Caco-2 (cell line): ENCODE measurements at regions of chr14 and their contacts with region 1.

Region 1: DNA sequence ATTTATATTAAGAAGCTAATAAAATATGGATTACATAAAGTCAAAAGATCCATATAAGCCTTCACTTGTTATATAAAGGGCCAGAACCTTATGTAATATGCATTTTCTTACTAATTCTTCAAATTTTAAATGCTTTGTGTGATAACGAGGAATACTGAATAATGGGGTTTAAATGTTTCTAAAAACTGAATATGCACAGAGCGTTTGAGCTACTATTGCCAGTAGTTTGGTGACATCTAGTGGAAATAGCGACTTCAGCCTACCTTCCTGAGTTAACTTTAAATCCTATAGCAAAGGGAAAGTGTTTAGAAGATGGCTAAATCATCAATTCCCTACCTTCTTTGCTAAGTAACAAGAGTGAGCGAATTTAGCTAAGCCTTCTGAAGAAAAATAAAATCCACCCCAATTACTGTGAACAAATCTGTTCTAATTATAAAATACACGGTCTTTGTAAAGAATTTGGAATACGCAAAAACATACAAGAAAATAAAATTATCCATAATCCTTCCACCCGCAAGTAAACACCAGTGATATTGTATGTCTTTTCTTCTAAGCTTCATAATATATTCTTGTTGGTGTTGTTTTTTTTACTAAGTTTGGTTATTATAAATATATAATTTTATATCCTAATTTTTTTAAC is 115.5 kb upstream of the G2E3 start:
- DNase-seq: peak in 1 of 2 experiments; percentile 27
- H3K4me3 ChIP-seq: no peak overlapping the region
- H3K4me3 Mint-ChIP-seq: no peak overlapping the region
- H3K27ac Mint-ChIP-seq: no peak overlapping the region
- H3K4me1 ChIP-seq: no peaks in the 10 kb centered on the region
- H3K4me1 Mint-ChIP-seq: no peaks in the 10 kb centered on the region
- H3K27me3 ChIP-seq: no peaks in the 10 kb centered on the region
- H3K27me3 Mint-ChIP-seq: no peaks in the 10 kb centered on the region
- CTCF ChIP-seq: peak; percentile 58 to 65

Region 2: DNA sequence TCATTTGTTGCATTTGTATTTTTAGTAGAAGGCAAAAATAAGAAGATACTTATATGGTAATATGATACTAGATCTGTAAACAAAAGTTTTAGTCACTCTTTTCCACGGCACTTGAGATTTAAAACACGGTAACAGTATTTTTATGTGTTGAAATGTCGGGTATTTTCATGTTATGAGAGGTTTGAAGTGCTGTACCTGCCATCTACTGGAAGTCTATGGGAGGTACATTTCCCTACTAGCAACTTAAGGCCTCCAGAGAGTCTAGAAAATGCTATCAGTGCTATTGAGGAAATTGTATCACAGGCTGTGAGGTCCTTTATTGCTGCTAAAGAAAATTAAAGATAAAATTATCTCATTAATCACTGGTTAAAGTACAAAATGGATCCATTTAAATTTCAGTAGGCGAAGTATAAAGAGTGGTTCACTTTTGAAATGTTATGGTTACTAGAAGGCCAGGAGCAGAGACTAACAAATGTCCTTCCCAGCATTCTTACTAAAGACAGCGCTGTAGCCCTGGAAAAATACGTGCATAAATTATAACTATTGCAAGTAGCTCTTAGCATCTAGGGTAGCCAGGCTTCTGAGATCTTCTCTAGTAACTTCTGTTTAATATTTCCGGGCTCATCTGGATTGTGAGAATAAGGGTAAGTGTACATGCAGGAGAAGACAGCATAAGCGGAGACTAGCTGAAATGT is 438.2 kb before region 1 on chr14:
- CTCF ChIA-PET with region 1: no interaction called
- POLR2A ChIA-PET with region 1: no interaction called
- intact Hi-C with region 1: loop called (anchors 5 kb)
- DNase-seq: peak in 1 of 2 experiments; percentile 20
- H3K4me3 ChIP-seq: no peak overlapping the region
- H3K4me3 Mint-ChIP-seq: no peak overlapping the region
- H3K27ac Mint-ChIP-seq: no peak overlapping the region
- H3K4me1 ChIP-seq: no peaks in the 10 kb centered on the region
- H3K4me1 Mint-ChIP-seq: no peaks in the 10 kb centered on the region
- H3K27me3 ChIP-seq: no peaks in the 10 kb centered on the region
- H3K27me3 Mint-ChIP-seq: peaks cover 9% of the 10 kb centered on the region
- CTCF ChIP-seq: peak; percentile 56 to 58

Region 3: DNA sequence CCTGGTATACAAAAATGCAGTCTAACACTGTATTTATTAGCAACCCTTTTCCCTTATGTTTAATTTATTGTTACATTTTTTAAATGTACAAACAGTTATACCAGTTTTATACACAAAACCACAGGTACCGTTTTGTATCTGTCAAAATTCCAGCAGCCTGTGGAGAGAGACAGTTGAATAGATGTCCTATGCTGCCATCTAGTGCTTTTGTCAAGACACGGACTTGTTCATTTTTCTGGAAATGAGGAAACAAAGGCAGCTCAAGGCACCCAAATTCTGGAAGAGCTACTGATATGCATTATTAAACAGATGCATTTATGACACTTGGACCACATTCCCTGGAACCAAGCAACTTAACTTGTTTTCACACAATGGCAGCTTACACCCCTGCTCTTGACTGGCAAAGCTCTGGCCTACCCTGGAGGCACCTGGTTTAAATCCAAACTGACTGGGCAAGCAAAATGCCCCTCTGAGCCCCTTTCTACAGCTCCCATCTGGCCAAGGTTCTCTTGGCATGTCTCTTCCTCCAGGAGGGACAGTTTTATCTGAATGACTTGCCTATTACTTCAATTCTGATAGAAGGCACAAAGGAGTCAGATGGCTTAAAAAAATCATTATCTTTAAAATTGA is 228.9 kb before region 1 on chr14:
- CTCF ChIA-PET with region 1: no interaction called
- POLR2A ChIA-PET with region 1: no interaction called
- intact Hi-C with region 1: loop called (anchors 1 kb)
- DNase-seq: peak in 1 of 2 experiments; percentile 32
- H3K4me3 ChIP-seq: no peak overlapping the region
- H3K4me3 Mint-ChIP-seq: no peak overlapping the region
- H3K27ac Mint-ChIP-seq: no peak overlapping the region
- H3K4me1 ChIP-seq: no peaks in the 10 kb centered on the region
- H3K4me1 Mint-ChIP-seq: no peaks in the 10 kb centered on the region
- H3K27me3 ChIP-seq: no peaks in the 10 kb centered on the region
- H3K27me3 Mint-ChIP-seq: peaks cover under 1% of the 10 kb centered on the region
- CTCF ChIP-seq: peak; percentile 32 to 63

Region 4: DNA sequence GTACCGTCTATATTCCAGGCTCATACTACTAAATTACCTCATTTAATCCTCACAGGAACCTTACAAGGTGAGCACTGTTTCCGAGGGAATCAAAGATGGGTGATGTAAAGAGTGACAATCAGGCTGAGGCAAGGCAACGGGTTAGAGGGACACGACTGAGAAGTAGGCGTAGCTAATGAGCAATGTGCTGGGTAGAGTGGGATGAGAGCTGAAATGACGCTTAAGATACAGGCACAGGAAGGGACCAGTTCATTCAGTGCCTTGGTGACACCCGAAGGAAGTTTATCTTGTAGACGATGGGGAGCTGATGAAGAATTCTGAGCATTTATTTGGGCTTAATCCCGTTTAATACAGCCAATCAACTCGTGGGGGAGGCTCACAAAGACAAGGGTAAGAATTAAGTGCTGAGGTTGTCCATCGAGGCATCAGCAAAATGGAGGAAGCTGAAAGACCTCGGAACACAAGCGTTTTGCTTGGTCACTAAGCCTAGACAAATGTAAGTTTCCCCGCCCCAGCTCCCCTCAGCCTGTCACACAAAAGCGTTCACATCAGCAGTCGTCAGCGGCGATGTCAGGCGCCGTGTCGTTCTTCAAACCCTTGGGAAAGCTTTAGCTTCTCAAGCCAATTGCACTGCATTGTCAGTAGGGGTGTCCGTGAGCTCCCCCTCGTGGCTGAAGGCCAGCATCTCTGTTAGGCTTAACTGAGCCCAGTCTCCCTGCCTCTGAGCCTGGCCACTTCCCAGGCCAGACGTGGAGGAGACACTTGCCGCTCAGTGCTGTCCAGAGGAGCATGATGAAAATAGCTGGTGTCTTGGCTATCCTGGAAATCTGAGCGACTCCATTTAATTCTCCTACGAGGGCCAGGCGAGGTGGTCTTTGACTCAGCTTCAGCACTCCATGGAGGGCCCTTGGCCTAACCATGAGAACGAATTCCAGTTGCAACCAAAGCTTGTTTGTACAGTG is 173.0 kb before region 1 on chr14:
- CTCF ChIA-PET with region 1: interaction called, 17 read pairs
- POLR2A ChIA-PET with region 1: no interaction called
- intact Hi-C with region 1: loop called (anchors 1 kb)
- DNase-seq: peak; percentile 75 to 80
- H3K4me3 ChIP-seq: no peak overlapping the region
- H3K4me3 Mint-ChIP-seq: no peak overlapping the region
- H3K27ac Mint-ChIP-seq: no peak overlapping the region
- H3K4me1 ChIP-seq: no peaks in the 10 kb centered on the region
- H3K4me1 Mint-ChIP-seq: no peaks in the 10 kb centered on the region
- H3K27me3 ChIP-seq: no peaks in the 10 kb centered on the region
- H3K27me3 Mint-ChIP-seq: no peaks in the 10 kb centered on the region
- CTCF ChIP-seq: peak; percentile 89 to 94

Region 5: GRCh38 chr14:30305346-30305745 is 138.1 kb before region 1 on chr14:
- CTCF ChIA-PET with region 1: no interaction called
- POLR2A ChIA-PET with region 1: no interaction called
- intact Hi-C with region 1: no loop called
- DNase-seq: no peak
- H3K4me3 ChIP-seq: no peak overlapping the region
- H3K4me3 Mint-ChIP-seq: no peak overlapping the region
- H3K27ac Mint-ChIP-seq: no peak overlapping the region
- H3K4me1 ChIP-seq: no peaks in the 10 kb centered on the region
- H3K4me1 Mint-ChIP-seq: no peaks in the 10 kb centered on the region
- H3K27me3 ChIP-seq: no peaks in the 10 kb centered on the region
- H3K27me3 Mint-ChIP-seq: peaks cover 12% of the 10 kb centered on the region
- CTCF ChIP-seq: no peak

Region 6: DNA sequence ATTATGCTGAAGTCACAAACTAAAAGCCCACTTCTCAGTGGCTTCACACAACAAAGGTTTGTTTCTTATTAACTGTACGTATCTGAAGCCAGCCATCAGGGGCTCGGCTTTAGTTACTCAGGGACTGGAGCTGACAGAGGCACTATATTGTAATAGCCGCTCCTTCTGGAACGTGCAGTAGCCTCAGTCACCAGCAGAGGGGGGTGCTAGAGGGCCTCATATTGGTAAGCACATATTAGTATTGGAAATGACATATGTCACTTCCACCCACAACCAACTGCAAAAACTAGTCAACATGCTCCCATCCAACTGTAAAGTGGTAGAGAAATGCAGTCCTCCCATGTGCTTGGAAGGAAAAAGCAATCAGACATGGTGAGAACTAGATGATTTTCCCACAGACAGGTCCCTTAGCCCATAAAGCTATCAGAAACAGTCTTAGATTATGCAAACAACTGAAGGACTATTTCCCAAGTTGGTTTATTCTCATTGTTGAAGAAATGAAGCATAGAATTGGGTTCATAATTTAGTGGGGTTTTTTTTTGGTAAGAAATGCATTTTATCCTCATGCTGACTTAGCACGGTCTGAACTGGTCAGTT is 68.1 kb before region 1 on chr14:
- CTCF ChIA-PET with region 1: interaction called, 10 read pairs
- POLR2A ChIA-PET with region 1: no interaction called
- intact Hi-C with region 1: loop called (anchors 1 kb)
- DNase-seq: peak; percentile 74 to 76
- H3K4me3 ChIP-seq: no peak overlapping the region
- H3K4me3 Mint-ChIP-seq: no peak overlapping the region
- H3K27ac Mint-ChIP-seq: no peak overlapping the region
- H3K4me1 ChIP-seq: no peaks in the 10 kb centered on the region
- H3K4me1 Mint-ChIP-seq: no peaks in the 10 kb centered on the region
- H3K27me3 ChIP-seq: no peaks in the 10 kb centered on the region
- H3K27me3 Mint-ChIP-seq: no peaks in the 10 kb centered on the region
- CTCF ChIP-seq: peak; percentile 71 to 74

Region 7: DNA sequence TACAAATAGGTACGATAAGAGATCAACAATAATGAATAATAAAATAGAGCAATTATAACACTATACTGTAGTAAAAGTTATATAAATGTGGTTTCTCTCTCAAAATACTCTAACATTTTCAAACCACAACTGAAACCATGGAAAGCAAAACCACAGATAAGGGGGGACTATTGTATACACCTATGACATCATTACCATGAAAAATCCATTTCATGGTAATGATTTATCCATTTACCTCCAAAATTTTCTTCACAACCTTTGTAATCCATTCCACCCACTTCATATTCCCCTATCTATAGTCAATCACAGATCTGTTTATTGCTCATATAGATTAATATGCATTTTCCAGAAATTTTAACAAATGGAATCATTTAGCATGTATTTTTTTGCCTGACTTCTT is 48.4 kb before region 1 on chr14:
- CTCF ChIA-PET with region 1: no interaction called
- POLR2A ChIA-PET with region 1: no interaction called
- intact Hi-C with region 1: no loop called
- DNase-seq: no peak
- H3K4me3 ChIP-seq: no peak overlapping the region
- H3K4me3 Mint-ChIP-seq: no peak overlapping the region
- H3K27ac Mint-ChIP-seq: no peak overlapping the region
- H3K4me1 ChIP-seq: no peaks in the 10 kb centered on the region
- H3K4me1 Mint-ChIP-seq: no peaks in the 10 kb centered on the region
- H3K27me3 ChIP-seq: no peaks in the 10 kb centered on the region
- H3K27me3 Mint-ChIP-seq: peaks cover 3% of the 10 kb centered on the region
- CTCF ChIP-seq: no peak

Region 8: DNA sequence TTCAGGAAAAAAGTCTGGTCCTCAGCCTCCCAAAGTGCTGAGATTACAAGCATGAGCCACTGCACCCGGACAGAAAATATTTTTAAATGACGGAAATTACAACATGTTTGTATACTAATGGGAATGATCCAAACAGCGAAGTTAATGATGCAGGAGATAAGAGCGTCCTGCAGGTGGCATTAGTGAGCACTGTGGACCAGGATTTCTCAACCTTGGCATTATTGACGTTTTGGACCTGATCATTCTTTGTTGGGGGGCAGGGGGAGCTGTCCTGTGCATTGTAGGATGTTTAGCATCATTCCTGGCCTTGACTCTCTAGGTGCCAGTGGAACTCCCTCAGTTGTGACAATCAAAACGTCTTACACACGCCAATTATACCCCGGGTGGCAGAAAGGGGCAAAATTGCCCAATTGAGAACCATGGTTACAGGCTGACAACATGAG is 212.7 kb after region 1 on chr14:
- CTCF ChIA-PET with region 1: no interaction called
- POLR2A ChIA-PET with region 1: no interaction called
- intact Hi-C with region 1: no loop called
- DNase-seq: peak in 1 of 2 experiments; percentile 38
- H3K4me3 ChIP-seq: no peak overlapping the region
- H3K4me3 Mint-ChIP-seq: no peak overlapping the region
- H3K27ac Mint-ChIP-seq: no peak overlapping the region
- H3K4me1 ChIP-seq: no peaks in the 10 kb centered on the region
- H3K4me1 Mint-ChIP-seq: no peaks in the 10 kb centered on the region
- H3K27me3 ChIP-seq: no peaks in the 10 kb centered on the region
- H3K27me3 Mint-ChIP-seq: no peaks in the 10 kb centered on the region
- CTCF ChIP-seq: peak; percentile 64 to 73